ENCODE measurements at regions of chr11 and their contacts with region 1.

Region 1: DNA sequence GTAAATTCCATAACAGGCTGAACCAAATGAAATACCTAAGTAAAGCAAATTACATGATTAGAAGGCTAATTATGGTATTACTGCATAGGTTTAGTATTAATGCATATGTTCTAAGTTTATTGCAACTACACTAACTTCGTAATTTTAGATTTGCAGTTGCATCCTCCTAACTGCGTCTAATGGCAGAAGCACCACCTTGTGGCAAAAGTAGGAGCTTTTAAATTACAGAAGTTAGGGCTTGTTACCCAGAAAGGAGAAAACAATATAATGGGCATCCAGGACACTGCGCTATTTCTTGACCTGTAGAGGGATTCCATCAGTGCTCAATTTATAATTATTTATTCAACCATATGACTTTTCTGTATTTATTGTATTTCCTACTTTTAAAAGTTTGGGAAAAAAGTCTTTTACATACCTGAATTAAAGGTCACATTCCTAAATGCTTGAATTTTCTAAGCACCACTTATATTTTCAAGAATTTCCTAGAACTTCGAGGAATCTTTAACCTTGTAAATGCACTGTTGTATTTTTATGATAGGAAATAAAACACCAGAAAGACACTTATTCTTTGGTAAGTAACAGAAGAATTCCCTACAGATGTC is 16.3 kb upstream of the GPR83 start:
- DNase-seq: peak; percentile 45
- H3K4me3 ChIP-seq: no peak overlapping the region
- H3K27ac ChIP-seq: no peak overlapping the region
- H3K4me1 ChIP-seq: no peaks in the 10 kb centered on the region
- H3K27me3 ChIP-seq: no peaks in the 10 kb centered on the region
- CTCF ChIP-seq: peak; percentile 75

Region 2: DNA sequence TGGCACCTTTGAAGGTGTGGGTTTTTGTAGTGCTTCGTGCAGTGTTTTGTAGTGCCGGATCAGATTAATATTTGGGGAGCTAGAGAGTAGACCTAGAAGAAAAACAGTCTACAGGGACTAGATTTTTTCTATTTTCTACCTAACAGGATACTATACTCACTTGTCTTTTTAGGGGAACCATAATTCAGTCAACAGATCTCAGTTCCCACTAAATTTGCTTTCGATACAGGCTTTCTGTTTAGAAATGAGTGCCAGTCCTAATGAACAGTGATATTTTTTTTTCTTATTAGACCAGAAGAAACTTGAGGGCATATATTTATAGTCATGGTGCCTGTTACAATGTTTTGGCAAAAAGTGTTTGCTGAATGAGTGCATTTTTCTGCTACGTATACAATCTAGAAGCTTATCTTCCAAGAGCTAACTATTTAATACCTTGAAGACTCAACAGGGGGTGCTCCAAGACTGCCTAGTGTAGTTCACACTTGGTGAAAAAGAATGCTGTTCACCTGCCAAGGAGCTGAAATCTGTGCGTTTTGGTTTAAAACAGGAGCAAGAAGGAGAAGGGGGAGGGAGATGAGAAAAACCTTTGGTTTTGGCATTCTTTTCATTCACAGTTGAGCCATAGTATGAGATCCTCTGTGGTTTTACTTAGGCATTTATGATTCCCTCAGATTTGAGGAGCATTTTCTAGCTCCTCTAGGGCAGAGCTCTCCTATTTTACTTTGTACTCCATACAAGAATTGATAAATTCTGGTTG is 522.2 kb before region 1 on chr11:
- CTCF ChIA-PET with region 1: interaction called, 19 read pairs
- POLR2A ChIA-PET with region 1: no interaction called
- intact Hi-C with region 1: no loop called
- DNase-seq: peak; percentile 70
- H3K4me3 ChIP-seq: no peak overlapping the region
- H3K27ac ChIP-seq: no peak overlapping the region
- H3K4me1 ChIP-seq: no peaks in the 10 kb centered on the region
- H3K27me3 ChIP-seq: peaks cover 21% of the 10 kb centered on the region
- CTCF ChIP-seq: peak; percentile 72

Region 3: GRCh38 chr11:93921695-93922468 is 495.6 kb before region 1 on chr11:
- CTCF ChIA-PET with region 1: interaction called, 3 read pairs
- POLR2A ChIA-PET with region 1: no interaction called
- intact Hi-C with region 1: loop called (anchors 5 kb)
- DNase-seq: peak; percentile 83
- H3K4me3 ChIP-seq: no peak overlapping the region
- H3K27ac ChIP-seq: no peak overlapping the region
- H3K4me1 ChIP-seq: no peaks in the 10 kb centered on the region
- H3K27me3 ChIP-seq: peaks cover 27% of the 10 kb centered on the region
- CTCF ChIP-seq: peak; percentile 86

Region 4: DNA sequence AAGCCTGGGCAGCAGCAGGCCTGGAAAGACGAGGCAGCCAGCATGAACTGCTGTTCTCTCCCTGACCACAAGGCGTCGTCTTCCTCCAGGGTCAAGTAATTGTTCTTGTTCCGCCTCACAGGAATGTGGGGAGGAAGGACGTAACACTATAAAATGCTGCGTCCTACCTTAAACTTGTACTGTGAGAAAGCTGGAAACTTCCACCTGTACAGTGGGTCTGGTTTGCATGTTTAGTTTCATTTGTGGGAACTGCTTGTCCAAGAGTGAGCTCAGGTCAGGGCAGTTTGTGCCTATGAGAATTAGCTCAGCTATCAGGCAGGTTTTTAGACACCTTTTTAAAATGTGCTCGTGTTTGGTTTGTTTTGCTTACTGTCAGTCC is 233.6 kb before region 1 on chr11:
- CTCF ChIA-PET with region 1: interaction called, 3 read pairs
- POLR2A ChIA-PET with region 1: no interaction called
- intact Hi-C with region 1: loop called (anchors 2 kb)
- DNase-seq: peak; percentile 60
- H3K4me3 ChIP-seq: no peak overlapping the region
- H3K27ac ChIP-seq: no peak overlapping the region
- H3K4me1 ChIP-seq: peaks cover 16% of the 10 kb centered on the region
- H3K27me3 ChIP-seq: no peaks in the 10 kb centered on the region
- CTCF ChIP-seq: peak; percentile 88

Region 5: DNA sequence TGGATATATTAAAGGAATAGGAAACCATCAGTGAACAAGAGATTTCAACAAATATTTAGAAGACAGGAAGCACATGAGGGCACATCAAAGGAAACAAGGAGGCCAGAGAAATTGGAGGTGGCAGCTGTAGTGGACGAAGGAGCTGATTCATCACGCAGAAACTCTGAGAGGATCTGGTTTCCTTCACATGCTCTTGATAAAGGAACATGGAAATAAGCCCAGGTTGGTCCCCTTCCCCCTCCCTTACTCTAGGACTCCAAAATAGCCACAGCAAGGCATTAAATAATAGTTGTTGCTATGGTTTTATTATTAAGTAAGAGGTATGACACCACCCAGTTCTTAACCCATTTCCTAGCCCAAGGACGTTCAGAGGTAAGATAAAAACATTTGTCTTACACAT is 101.8 kb before region 1 on chr11:
- CTCF ChIA-PET with region 1: no interaction called
- POLR2A ChIA-PET with region 1: no interaction called
- intact Hi-C with region 1: no loop called
- DNase-seq: no peak
- H3K4me3 ChIP-seq: no peak overlapping the region
- H3K27ac ChIP-seq: no peak overlapping the region
- H3K4me1 ChIP-seq: no peaks in the 10 kb centered on the region
- H3K27me3 ChIP-seq: peaks cover 27% of the 10 kb centered on the region
- CTCF ChIP-seq: no peak

Region 6: DNA sequence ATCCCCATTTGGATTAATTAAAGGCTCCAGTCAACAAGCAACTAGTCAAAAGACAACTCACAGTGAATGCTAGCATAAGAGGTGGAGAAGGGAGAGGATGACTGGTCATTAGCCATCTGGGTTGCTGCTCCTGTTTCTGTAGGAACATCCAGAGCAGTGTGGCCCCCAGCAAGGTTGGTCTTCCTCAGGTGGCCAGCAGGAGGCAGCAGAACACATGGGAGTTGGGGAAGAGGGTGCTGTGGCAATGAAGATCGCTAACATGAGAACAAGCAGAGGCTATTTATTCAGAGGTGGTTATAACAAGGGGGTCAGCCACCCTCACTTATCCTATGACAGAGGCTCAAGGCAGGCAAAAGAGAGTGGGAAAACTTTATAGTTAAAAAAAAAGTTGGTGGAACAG is 91.8 kb before region 1 on chr11:
- CTCF ChIA-PET with region 1: interaction called, 3 read pairs
- POLR2A ChIA-PET with region 1: no interaction called
- intact Hi-C with region 1: loop called (anchors 2 kb)
- DNase-seq: peak; percentile 64
- H3K4me3 ChIP-seq: no peak overlapping the region
- H3K27ac ChIP-seq: no peak overlapping the region
- H3K4me1 ChIP-seq: no peaks in the 10 kb centered on the region
- H3K27me3 ChIP-seq: peaks cover 10% of the 10 kb centered on the region
- CTCF ChIP-seq: peak; percentile 76

Measured in A673 (cell line).